H1 (cell line): ENCODE measurements at regions of chr20 and their contacts with region 1.

Region 1: GRCh38 chr20:381581-382290 is 1.2 kb downstream of the TRIB3 start:
- DNase-seq: peak in 1 of 2 experiments; percentile 64
- H3K4me3 ChIP-seq: peak overlapping the region; percentile 38 to 87 (median 50)
- H3K27ac ChIP-seq: no peak overlapping the region
- H3K4me1 ChIP-seq: peaks cover 0 to 7% (median 1%) of the 10 kb centered on the region in 4 experiments; a peak in 3 of 7 replicates
- H3K27me3 ChIP-seq: peaks cover 0 to 15% (median 8%) of the 10 kb centered on the region in 4 experiments; a peak in 5 of 7 replicates
- CTCF ChIP-seq: no peak
- EP300 ChIP-seq: no peak
- POLR2A ChIP-seq: no peak
- RAD21 ChIP-seq: no peak

Region 2: DNA sequence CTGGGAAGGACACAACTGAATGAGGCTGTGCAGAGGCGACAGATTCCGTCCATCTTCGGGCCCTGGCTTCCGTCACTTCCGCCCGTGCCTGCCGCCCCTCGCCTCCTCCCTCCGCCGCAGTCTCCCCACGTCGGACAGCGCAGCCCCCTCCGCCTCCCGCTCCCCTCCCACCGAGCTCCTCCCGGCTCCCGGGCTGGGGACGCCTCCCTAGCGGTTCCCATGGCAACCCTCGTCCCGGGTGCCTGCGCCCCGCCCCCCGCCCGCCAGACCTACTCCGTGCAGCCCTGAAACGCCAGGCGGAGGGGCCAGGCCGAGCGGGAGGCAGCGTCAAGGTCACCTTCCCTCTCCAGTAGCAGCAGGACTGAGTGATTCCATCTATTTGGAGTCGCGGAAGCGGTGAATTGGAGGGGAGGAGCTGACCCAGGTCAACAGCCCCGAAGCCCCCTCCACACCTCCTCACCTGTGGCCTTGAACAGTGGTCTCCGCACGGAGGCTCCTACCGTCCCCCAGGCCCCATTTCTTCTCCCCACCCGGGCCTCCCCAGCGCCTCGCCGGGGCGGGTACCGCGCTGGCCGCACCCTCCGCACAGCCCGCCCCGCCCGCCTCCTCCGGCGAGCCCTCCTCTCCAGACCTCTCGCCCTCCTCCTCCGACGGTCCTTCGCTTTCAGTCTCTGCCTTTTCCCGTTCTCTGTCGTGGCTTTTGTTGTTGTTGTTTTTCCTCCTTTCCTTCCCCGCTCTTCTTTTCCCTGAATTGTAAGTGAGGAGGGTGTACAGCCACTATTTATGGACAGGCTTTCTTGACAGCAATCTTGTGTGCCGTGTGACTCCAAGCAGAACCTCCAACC is 33.9 kb before region 1 on chr20:
- CTCF ChIA-PET with region 1: interaction called, 3 read pairs
- POLR2A ChIA-PET with region 1: interaction called, 13 read pairs
- DNase-seq: peak; percentile 89 to 94
- H3K4me3 ChIP-seq: peak overlapping the region; percentile 63 to 90 (median 66)
- H3K27ac ChIP-seq: peak overlapping the region; percentile 85
- H3K4me1 ChIP-seq: peaks cover 0 to 12% (median 8%) of the 10 kb centered on the region in 4 experiments; a peak in 4 of 7 replicates
- H3K27me3 ChIP-seq: peaks cover 0 to 3% (median 0%) of the 10 kb centered on the region in 4 experiments; a peak in 3 of 7 replicates
- CTCF ChIP-seq: no peak
- EP300 ChIP-seq: peak in 1 of 2 experiments; percentile 65; a peak in 1 of 3 replicates
- POLR2A ChIP-seq: peak; percentile 32 to 76
- RAD21 ChIP-seq: no peak

Region 3: GRCh38 chr20:354298-355064 is 27.3 kb before region 1 on chr20:
- CTCF ChIA-PET with region 1: interaction called, 18 read pairs
- POLR2A ChIA-PET with region 1: interaction called, 9 read pairs
- DNase-seq: peak in 1 of 2 experiments; percentile 92
- H3K4me3 ChIP-seq: no peak overlapping the region
- H3K27ac ChIP-seq: no peak overlapping the region
- H3K4me1 ChIP-seq: peaks cover 0 to under 1% (median 0%) of the 10 kb centered on the region in 4 experiments; a peak in 1 of 7 replicates
- H3K27me3 ChIP-seq: no peaks in the 10 kb centered on the region
- CTCF ChIP-seq: peak; percentile 87 to 98 (median 96)
- EP300 ChIP-seq: no peak
- POLR2A ChIP-seq: no peak
- RAD21 ChIP-seq: peak; percentile 97

Region 4: GRCh38 chr20:362271-363254 is 19.2 kb before region 1 on chr20:
- CTCF ChIA-PET with region 1: interaction called, 4 read pairs
- POLR2A ChIA-PET with region 1: interaction called, 172 read pairs
- DNase-seq: no peak
- H3K4me3 ChIP-seq: no peak overlapping the region
- H3K27ac ChIP-seq: no peak overlapping the region
- H3K4me1 ChIP-seq: no peaks in the 10 kb centered on the region; a peak in 2 of 7 replicates
- H3K27me3 ChIP-seq: no peaks in the 10 kb centered on the region
- CTCF ChIP-seq: peak; percentile 44 to 54 (median 49)
- EP300 ChIP-seq: no peak
- POLR2A ChIP-seq: no peak
- RAD21 ChIP-seq: peak; percentile 44 to 58

Region 5: DNA sequence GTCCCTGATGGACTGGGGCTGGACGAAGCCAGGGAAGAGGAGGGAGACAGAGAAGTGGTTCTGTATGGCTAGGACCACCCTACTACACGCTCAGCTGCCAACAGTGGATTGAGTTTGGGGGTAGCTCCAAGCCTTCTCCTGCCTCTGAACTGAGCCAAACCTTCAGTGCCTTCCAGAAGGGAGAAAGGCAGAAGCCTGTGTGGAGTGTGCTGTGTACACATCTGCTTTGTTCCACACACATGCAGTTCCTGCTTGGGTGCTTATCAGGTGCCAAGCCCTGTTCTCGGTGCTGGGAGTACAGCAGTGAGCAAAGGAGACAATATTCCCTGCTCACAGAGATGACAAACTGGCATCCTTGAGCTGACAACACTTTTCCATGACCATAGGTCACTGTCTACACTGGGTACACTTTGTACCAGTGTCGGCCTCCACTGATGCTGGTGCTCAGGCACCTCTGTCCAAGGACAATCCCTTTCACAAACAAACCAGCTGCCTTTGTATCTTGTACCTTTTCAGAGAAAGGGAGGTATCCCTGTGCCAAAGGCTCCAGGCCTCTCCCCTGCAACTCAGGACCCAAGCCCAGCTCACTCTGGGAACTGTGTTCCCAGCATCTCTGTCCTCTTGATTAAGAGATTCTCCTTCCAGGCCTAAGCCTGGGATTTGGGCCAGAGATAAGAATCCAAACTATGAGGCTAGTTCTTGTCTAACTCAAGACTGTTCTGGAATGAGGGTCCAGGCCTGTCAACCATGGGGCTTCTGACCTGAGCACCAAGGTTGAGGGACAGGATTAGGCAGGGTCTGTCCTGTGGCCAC is 15.1 kb after region 1 on chr20:
- CTCF ChIA-PET with region 1: interaction called, 10 read pairs
- POLR2A ChIA-PET with region 1: interaction called, 263 read pairs
- DNase-seq: no peak
- H3K4me3 ChIP-seq: no peak overlapping the region
- H3K27ac ChIP-seq: no peak overlapping the region
- H3K4me1 ChIP-seq: peaks cover 3 to 7% (median 4%) of the 10 kb centered on the region in 4 experiments; a peak in 4 of 7 replicates
- H3K27me3 ChIP-seq: no peaks in the 10 kb centered on the region
- CTCF ChIP-seq: no peak
- EP300 ChIP-seq: no peak
- POLR2A ChIP-seq: no peak
- RAD21 ChIP-seq: no peak

Region 6: DNA sequence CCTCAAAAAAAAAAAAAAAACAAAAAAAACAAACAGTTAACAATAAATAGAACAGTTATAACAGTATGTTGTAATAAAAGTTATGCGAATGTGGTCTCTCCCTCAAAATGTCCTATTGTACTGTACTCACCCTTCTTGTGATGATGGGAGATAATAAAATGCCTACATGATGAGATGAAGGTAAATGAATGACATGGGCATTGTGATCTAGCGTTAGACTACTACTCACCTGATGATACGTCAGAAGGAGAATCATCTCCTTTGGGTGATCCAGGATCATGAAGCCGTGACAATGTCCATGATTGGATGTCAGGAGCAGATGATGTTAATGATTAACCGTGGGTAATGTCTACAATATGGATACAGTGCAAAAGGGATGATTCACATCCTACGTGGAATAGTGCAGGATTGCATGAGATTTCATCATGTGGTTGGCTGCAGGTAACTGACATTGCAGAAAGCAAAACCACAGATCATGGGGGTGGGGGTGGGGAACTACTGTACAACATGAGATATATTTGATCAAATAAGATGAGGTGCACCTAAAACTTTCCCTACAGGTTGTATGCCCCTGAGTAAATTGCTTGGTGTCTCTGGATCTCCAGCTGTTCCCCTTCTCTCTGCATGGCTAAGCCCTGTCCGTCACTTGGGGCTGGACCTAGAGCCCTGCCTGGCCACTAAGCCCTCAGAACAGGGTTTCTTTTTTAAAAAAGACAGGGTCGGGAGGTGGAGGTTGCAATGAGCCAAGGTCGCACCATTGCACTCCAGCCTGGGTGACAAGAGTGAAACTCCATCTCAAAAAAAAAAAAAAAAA is 20.2 kb after region 1 on chr20:
- CTCF ChIA-PET with region 1: interaction called, 11 read pairs
- POLR2A ChIA-PET with region 1: interaction called, 263 read pairs
- DNase-seq: no peak
- H3K4me3 ChIP-seq: no peak overlapping the region
- H3K27ac ChIP-seq: no peak overlapping the region
- H3K4me1 ChIP-seq: peaks cover 3 to 7% (median 6%) of the 10 kb centered on the region in 4 experiments; a peak in 5 of 7 replicates
- H3K27me3 ChIP-seq: no peaks in the 10 kb centered on the region
- CTCF ChIP-seq: no peak
- EP300 ChIP-seq: no peak
- POLR2A ChIP-seq: no peak
- RAD21 ChIP-seq: no peak

Region 7: DNA sequence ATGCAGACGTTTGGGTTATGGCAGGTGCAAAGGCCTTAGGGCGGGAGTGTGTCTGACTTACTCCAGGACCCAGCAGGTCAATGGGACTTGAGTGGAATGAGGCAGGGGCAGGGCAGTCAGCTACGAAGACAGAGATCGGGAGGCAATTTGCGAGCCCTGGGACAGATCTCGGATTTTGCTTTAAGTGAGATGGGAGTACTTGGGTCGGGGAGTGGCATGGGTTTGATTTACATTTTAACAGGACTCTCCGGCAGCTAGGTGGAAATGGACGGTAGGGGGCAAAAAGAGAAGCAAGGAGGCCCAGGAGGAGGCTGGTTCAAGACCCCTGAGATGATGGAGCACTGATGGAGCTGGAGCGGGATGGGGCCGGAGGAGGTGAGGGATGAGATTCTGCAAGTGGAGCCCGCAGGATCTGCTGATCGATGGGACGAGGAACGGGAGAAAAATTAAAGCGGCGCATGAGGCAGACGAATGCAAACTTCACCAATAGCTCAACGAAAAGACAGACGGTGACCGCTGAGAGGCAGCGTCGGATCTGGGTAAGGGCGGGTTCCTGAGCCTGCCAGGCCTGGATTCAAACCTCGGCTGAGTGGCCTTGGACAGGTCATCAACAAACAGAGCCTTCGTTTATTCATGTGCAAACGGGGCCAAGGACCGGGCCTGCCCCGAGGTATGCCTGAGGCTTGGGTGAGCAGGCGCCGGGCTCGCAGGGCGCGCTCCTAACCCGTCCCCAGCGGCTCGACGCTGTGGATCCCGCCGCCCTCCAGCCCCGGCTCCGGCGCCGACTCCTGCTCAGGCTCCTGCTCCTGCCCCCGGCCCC is 25.6 kb after region 1 on chr20:
- CTCF ChIA-PET with region 1: interaction called, 11 read pairs
- POLR2A ChIA-PET with region 1: interaction called, 263 read pairs
- DNase-seq: peak; percentile 72 to 88
- H3K4me3 ChIP-seq: peak overlapping the region; percentile 65 to 99 (median 72)
- H3K27ac ChIP-seq: peak overlapping the region; percentile 45; the same call in 1 of the 2 replicates
- H3K4me1 ChIP-seq: peaks cover 0 to 10% (median 6%) of the 10 kb centered on the region in 4 experiments; a peak in 5 of 7 replicates
- H3K27me3 ChIP-seq: no peaks in the 10 kb centered on the region
- CTCF ChIP-seq: peak; percentile 17 to 58 (median 33)
- EP300 ChIP-seq: no peak
- POLR2A ChIP-seq: peak; percentile 60 to 76
- RAD21 ChIP-seq: peak; percentile 0 to 18; a peak in 1 of 4 replicates

Region 8: DNA sequence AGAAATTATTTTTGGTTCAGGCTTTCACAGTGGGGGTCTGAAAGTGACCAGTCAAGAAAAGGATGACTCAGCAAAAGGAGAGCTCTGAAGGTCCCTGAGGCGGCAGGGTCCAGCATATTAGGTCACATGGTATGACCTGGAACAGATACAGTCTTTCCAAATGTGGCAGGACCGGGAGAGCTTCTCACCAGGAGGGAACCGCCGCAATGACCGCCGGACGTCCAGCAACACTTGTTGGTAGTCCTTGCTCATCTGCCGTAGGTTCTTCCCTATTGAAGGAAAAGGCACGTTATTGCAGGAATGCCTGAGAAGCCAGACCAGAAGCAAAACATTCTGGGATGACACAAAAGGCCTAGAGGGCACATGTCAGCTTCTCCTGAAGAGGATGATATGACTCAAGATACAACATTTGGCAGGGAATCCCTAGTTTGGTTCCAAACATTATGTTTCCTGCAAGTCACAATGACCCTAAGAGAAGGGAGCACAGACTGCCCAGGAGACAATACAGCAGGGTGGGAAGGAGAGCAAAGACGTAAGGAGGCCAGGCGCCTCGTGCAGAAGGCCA is 63.2 kb after region 1 on chr20:
- CTCF ChIA-PET with region 1: no interaction called
- POLR2A ChIA-PET with region 1: no interaction called
- DNase-seq: no peak
- H3K4me3 ChIP-seq: no peak overlapping the region
- H3K27ac ChIP-seq: no peak overlapping the region
- H3K4me1 ChIP-seq: no peaks in the 10 kb centered on the region
- H3K27me3 ChIP-seq: no peaks in the 10 kb centered on the region
- CTCF ChIP-seq: no peak
- EP300 ChIP-seq: no peak
- POLR2A ChIP-seq: no peak
- RAD21 ChIP-seq: no peak